Psoas muscle (tissue), 8 donors: ENCODE measurements at regions of chr5 and their contacts with region 1.

Region 1: DNA sequence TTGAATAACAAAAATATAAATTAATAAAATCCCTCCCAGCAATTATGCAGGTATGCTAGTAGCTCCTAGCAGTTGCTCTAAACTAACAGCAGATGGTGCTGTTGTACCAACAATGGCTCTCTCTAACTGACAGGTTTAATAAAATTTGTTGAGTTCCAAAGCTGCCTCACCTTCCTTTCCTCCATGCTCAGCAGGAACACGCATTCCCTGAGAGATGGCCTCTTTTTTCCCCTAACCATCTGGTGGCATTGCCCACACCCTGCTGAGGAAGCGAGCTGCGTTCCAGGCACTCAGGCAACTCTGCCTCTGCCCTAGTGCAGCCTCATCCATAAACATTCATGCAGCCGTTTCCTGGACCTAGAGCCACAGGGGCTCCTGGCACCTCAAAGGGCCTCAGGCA is 106.2 kb downstream of the KLHL3 start:
- DNase-seq: no peak
- ATAC-seq: peak; percentile 65 to 88 (median 78)
- H3K4me3 ChIP-seq: no peak overlapping the region
- H3K27ac ChIP-seq: no peak overlapping the region
- H3K4me1 ChIP-seq: no peaks in the 10 kb centered on the region
- H3K27me3 ChIP-seq: no peaks in the 10 kb centered on the region
- CTCF ChIP-seq: peak; percentile 95

Region 2: DNA sequence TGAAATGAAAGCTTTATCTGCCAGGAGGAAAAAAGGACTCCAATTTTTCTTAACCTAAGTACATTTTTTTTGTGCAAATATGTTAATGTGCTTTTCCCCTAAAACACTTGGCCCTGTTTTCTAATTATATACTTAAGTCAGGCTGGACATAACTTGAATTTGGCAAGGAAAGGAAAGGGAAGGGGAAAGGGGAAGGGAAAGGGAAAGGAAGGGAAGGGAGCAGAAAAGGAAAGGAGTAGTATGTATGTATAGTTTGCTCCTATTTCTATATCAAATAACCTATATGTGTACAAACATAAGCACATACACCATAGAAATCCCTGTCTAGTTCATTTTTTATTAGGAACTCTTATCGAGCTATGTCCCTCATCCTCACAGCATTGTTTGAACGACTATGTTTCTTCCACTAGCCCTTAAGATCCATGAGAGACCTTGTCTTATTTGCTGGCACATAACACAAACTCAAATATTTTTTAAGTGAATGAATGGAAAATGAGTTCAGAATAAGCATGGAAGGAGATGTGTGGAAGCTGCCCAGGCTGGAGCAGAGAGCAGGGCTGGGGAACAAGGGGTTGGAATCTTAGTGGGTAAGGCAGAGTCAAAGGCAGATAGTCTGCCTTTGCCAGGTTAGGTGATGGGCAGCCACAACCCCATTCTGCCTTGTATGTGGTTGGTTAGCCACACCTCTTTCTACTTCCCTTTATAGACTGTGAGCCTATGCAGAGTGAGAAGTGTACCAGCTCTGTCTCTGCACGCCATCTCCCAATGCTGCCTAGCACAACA is 36.2 kb after region 1 on chr5:
- intact Hi-C with region 1: loop called in 1 of 2 experiments (anchors 5 kb)
- DNase-seq: no peak
- ATAC-seq: peak in 2 of 4 donors; percentile 31 to 67
- H3K4me3 ChIP-seq: no peak overlapping the region
- H3K27ac ChIP-seq: no peak overlapping the region
- H3K4me1 ChIP-seq: no peaks in the 10 kb centered on the region
- H3K27me3 ChIP-seq: no peaks in the 10 kb centered on the region
- CTCF ChIP-seq: no peak

Region 3: GRCh38 chr5:137684761-137685160 is 55.1 kb after region 1 on chr5:
- intact Hi-C with region 1: no loop called
- DNase-seq: no peak
- ATAC-seq: no peak
- H3K4me3 ChIP-seq: no peak overlapping the region
- H3K27ac ChIP-seq: no peak overlapping the region
- H3K4me1 ChIP-seq: no peaks in the 10 kb centered on the region
- H3K27me3 ChIP-seq: no peaks in the 10 kb centered on the region
- CTCF ChIP-seq: no peak

Region 4: GRCh38 chr5:137743031-137743640 is 113.5 kb after region 1 on chr5:
- intact Hi-C with region 1: loop called (anchors 1 kb)
- DNase-seq: no peak
- ATAC-seq: peak; percentile 62 to 90 (median 84)
- H3K4me3 ChIP-seq: no peak overlapping the region
- H3K27ac ChIP-seq: no peak overlapping the region
- H3K4me1 ChIP-seq: no peaks in the 10 kb centered on the region
- H3K27me3 ChIP-seq: no peaks in the 10 kb centered on the region
- CTCF ChIP-seq: peak; percentile 70

Region 5: GRCh38 chr5:137815202-137815985 is 185.7 kb after region 1 on chr5:
- intact Hi-C with region 1: loop called (anchors 10 kb)
- DNase-seq: no peak
- ATAC-seq: peak; percentile 49 to 97 (median 86)
- H3K4me3 ChIP-seq: no peak overlapping the region
- H3K27ac ChIP-seq: peak overlapping the region; percentile 38
- H3K4me1 ChIP-seq: peaks cover 11% of the 10 kb centered on the region
- H3K27me3 ChIP-seq: no peaks in the 10 kb centered on the region
- CTCF ChIP-seq: no peak